A673 (cell line): ENCODE measurements at regions of chr4 and their contacts with region 1.

Region 1: DNA sequence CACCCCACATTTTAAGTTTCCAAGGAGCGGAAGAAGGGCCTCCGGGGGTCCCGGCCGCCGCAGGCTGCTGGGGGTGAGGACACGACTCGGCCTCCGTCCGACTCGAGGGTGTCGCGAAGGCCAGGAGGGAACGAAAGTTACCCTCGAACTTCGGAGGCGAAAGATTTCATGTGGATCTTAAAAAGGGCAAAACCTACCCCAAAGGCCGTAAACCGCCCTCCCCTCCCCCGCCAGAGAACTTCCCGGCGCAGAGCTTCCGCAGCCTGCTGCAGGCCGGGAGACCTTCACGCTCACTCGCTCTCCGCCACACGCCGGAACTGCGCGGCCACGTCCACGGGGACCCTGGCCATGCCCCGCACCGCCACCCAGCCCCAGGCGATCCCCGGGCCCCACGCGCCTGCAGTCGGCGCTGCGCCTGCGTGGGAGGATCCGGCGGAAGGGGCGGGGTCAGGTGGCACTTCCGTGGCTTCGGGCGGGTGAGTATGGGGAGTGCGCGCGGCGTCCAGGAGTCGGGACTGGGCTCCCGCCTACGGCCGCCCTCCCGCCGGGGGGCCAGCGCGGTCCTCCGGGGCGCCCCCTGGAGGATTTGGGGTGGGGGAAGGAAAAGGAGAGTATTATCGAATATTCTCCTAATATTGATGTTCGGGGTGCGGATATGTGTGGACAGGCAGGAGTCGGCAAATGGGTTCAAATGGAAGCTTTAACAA is at the start of gene MMAA:
- DNase-seq: peak; percentile 97
- H3K4me3 ChIP-seq: peak within 1 kb of the TSS; percentile 70
- H3K27ac ChIP-seq: peak within 1 kb of the TSS; percentile 95
- H3K4me1 ChIP-seq: peaks cover 3% of the 10 kb centered on the region
- H3K27me3 ChIP-seq: no peaks in the 10 kb centered on the region
- CTCF ChIP-seq: peak; percentile 81
- total RNA-seq, gene MMAA: 5.5 and 6.8 TPM in 2 replicates

Region 2: GRCh38 chr4:145154573-145154972 is 464.5 kb before region 1 on chr4:
- CTCF ChIA-PET with region 1: interaction called, 10 read pairs
- POLR2A ChIA-PET with region 1: no interaction called
- intact Hi-C with region 1: no loop called
- DNase-seq: no peak
- H3K4me3 ChIP-seq: no peak overlapping the region
- H3K27ac ChIP-seq: no peak overlapping the region
- H3K4me1 ChIP-seq: no peaks in the 10 kb centered on the region
- H3K27me3 ChIP-seq: no peaks in the 10 kb centered on the region
- CTCF ChIP-seq: peak; percentile 44; the same call in 1 of the 2 replicates

Region 3: DNA sequence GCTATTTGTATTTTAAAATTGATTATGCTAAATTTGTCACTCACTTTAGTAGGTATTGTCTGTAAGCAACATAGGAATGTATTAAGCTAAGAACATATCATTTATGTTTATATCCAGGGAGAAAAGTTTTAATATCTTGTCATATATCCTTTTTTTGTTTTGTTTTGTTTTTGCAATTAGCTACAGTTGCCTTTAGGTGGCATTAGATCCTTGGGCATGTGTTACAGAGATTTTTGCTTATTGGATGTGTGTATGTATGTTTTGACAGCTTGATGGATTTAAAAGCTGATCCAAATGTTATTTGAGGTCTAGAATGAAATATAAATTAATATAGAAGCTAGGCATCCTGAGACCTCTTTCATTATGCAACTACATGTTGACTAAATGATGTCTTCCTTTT is 402.6 kb before region 1 on chr4:
- CTCF ChIA-PET with region 1: interaction called, 4 read pairs
- POLR2A ChIA-PET with region 1: no interaction called
- intact Hi-C with region 1: loop called (anchors 1 kb)
- DNase-seq: peak; percentile 37
- H3K4me3 ChIP-seq: no peak overlapping the region
- H3K27ac ChIP-seq: no peak overlapping the region
- H3K4me1 ChIP-seq: no peaks in the 10 kb centered on the region
- H3K27me3 ChIP-seq: no peaks in the 10 kb centered on the region
- CTCF ChIP-seq: peak; percentile 65

Region 4: GRCh38 chr4:145902531-145902930 is 283.4 kb after region 1 on chr4:
- CTCF ChIA-PET with region 1: no interaction called
- POLR2A ChIA-PET with region 1: no interaction called
- intact Hi-C with region 1: no loop called
- DNase-seq: no peak
- H3K4me3 ChIP-seq: no peak overlapping the region
- H3K27ac ChIP-seq: no peak overlapping the region
- H3K4me1 ChIP-seq: peaks cover 2% of the 10 kb centered on the region
- H3K27me3 ChIP-seq: no peaks in the 10 kb centered on the region
- CTCF ChIP-seq: no peak

Region 5: GRCh38 chr4:146222313-146222712 is 603.2 kb after region 1 on chr4:
- CTCF ChIA-PET with region 1: no interaction called
- POLR2A ChIA-PET with region 1: no interaction called
- intact Hi-C with region 1: no loop called
- DNase-seq: no peak
- H3K4me3 ChIP-seq: no peak overlapping the region
- H3K27ac ChIP-seq: no peak overlapping the region
- H3K4me1 ChIP-seq: no peaks in the 10 kb centered on the region
- H3K27me3 ChIP-seq: no peaks in the 10 kb centered on the region
- CTCF ChIP-seq: no peak

Region 6: GRCh38 chr4:147096667-147097604 is 1477.9 kb after region 1 on chr4:
- CTCF ChIA-PET with region 1: interaction called, 4 read pairs
- POLR2A ChIA-PET with region 1: no interaction called
- intact Hi-C with region 1: loop called (anchors 10 kb)
- DNase-seq: peak; percentile 71
- H3K4me3 ChIP-seq: no peak overlapping the region
- H3K27ac ChIP-seq: no peak overlapping the region
- H3K4me1 ChIP-seq: no peaks in the 10 kb centered on the region
- H3K27me3 ChIP-seq: no peaks in the 10 kb centered on the region
- CTCF ChIP-seq: peak; percentile 72

Region 7: DNA sequence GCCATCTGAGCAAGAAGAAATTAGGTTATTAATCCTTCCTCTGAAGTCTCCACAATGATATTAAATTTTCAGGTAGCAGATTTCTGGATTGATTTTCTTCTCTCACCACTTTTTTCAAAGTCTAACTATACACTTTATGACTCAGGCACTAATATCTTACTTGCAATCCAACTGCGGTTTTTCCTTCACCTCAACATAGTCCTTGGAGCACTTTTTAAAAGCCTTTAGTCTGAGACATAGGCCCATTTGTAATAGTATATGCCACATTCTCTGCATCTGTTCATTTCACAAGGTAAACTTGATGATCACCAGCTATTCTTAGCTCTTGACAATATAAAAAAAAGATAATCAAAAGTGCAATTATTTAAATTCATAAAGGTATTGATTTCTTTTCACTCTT is 1805.9 kb after region 1 on chr4:
- CTCF ChIA-PET with region 1: no interaction called
- POLR2A ChIA-PET with region 1: no interaction called
- intact Hi-C with region 1: no loop called
- DNase-seq: no peak
- H3K4me3 ChIP-seq: no peak overlapping the region
- H3K27ac ChIP-seq: no peak overlapping the region
- H3K4me1 ChIP-seq: peaks cover 6% of the 10 kb centered on the region
- H3K27me3 ChIP-seq: no peaks in the 10 kb centered on the region
- CTCF ChIP-seq: no peak